Panc1 (cell line): ENCODE measurements at regions of chr9 and their contacts with region 1.

Region 1: GRCh38 chr9:131824155-131824594 is 84.3 kb upstream of the RAPGEF1 start:
- DNase-seq: no peak
- ATAC-seq: 0 out of 2 replicates have a peak, but pooled peaks have one; percentile 34
- H3K4me3 ChIP-seq: no peak overlapping the region
- H3K27ac ChIP-seq: no peak overlapping the region
- H3K4me1 ChIP-seq: no peaks in the 10 kb centered on the region
- H3K27me3 ChIP-seq: no peaks in the 10 kb centered on the region
- CTCF ChIP-seq: no peak

Region 2: DNA sequence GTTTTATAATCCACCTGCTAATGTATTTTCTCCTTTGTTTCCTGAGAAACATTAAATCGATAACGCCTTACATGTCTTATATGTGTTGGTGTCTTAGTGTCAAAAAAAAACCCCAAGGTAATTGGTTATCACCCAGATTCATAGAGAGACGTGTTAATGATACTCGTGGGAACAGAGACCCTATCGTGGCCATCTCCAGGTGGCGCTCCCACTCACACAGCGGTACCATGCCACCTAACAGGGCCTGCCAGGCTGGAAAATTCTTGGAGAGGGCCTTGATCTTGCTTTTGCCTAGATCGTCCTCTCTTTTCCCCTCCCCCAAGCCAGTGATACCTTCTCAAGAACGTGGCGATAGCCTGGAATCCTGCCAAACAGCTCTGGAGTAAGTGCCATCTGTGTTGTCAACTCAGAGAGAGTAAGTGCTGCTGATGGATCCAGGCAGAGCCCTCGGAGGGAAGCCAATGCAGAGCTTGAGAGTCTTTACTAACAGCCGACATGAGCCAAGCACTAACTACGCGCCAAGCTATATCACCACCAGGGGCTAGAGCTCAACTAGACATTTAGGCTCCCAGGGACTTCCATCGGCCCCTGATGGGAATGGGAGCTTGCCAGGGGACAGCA is 102.1 kb before region 1 on chr9:
- CTCF ChIA-PET with region 1: interaction called, 13 read pairs
- POLR2A ChIA-PET with region 1: no interaction called
- in situ Hi-C with region 1: no loop called
- intact Hi-C with region 1: no loop called
- DNase-seq: no peak
- ATAC-seq: no peak
- H3K4me3 ChIP-seq: no peak overlapping the region
- H3K27ac ChIP-seq: no peak overlapping the region
- H3K4me1 ChIP-seq: peaks cover 11% of the 10 kb centered on the region
- H3K27me3 ChIP-seq: no peaks in the 10 kb centered on the region
- CTCF ChIP-seq: no peak; the same call in 1 of the 2 replicates

Region 3: GRCh38 chr9:131762356-131762932 is 61.7 kb before region 1 on chr9:
- CTCF ChIA-PET with region 1: no interaction called
- POLR2A ChIA-PET with region 1: no interaction called
- in situ Hi-C with region 1: no loop called
- intact Hi-C with region 1: no loop called
- DNase-seq: no peak
- ATAC-seq: peak; percentile 94
- H3K4me3 ChIP-seq: no peak overlapping the region; a peak in 1 of 4 replicates
- H3K27ac ChIP-seq: no peak overlapping the region
- H3K4me1 ChIP-seq: no peaks in the 10 kb centered on the region
- H3K27me3 ChIP-seq: no peaks in the 10 kb centered on the region
- CTCF ChIP-seq: peak; percentile 85

Region 4: GRCh38 chr9:132260846-132261245 is 436.7 kb after region 1 on chr9:
- CTCF ChIA-PET with region 1: no interaction called
- POLR2A ChIA-PET with region 1: no interaction called
- in situ Hi-C with region 1: no loop called
- intact Hi-C with region 1: no loop called
- DNase-seq: no peak
- ATAC-seq: no peak
- H3K4me3 ChIP-seq: no peak overlapping the region
- H3K27ac ChIP-seq: no peak overlapping the region
- H3K4me1 ChIP-seq: no peaks in the 10 kb centered on the region
- H3K27me3 ChIP-seq: no peaks in the 10 kb centered on the region
- CTCF ChIP-seq: no peak